ENCODE measurements at regions of chr20 and their contacts with region 1.

Region 1: GRCh38 chr20:41161886-41162285 is 24.5 kb downstream of the PLCG1 start:
- DNase-seq: peak in 3 of 35 experiments; percentile 16 to 39 (median 28)
- ATAC-seq: no peak
- H3K4me3 ChIP-seq: no peak overlapping the region
- H3K4me3 Mint-ChIP-seq: peak overlapping the region in 2 of 3 donors; percentile 58 to 61
- H3K27ac ChIP-seq: peak overlapping the region; percentile 90
- H3K27ac Mint-ChIP-seq: peak overlapping the region; percentile 92 to 97
- H3K4me1 ChIP-seq: peaks cover 39 to 86% of the 10 kb centered on the region in 2 experiments
- H3K4me1 Mint-ChIP-seq: peaks cover 76 to 82% (median 76%) of the 10 kb centered on the region in 3 donors
- H3K27me3 ChIP-seq: no peaks in the 10 kb centered on the region
- H3K27me3 Mint-ChIP-seq: peaks cover 0 to 2% of the 10 kb centered on the region in 2 donors

Region 2: GRCh38 chr20:41178904-41179432 is 17.1 kb after region 1 on chr20:
- CTCF ChIA-PET with region 1: no interaction called
- POLR2A ChIA-PET with region 1: no interaction called
- DNase-seq: peak in 1 of 35 experiments; percentile 0
- ATAC-seq: no peak
- H3K4me3 ChIP-seq: no peak overlapping the region
- H3K4me3 Mint-ChIP-seq: no peak overlapping the region
- H3K27ac ChIP-seq: no peak overlapping the region
- H3K27ac Mint-ChIP-seq: peak overlapping the region; percentile 23 to 66
- H3K4me1 ChIP-seq: peaks cover 0 to 10% of the 10 kb centered on the region in 2 experiments
- H3K4me1 Mint-ChIP-seq: peaks cover 12 to 17% (median 15%) of the 10 kb centered on the region in 3 donors
- H3K27me3 ChIP-seq: no peaks in the 10 kb centered on the region
- H3K27me3 Mint-ChIP-seq: no peaks in the 10 kb centered on the region

Region 3: GRCh38 chr20:41339507-41340326 is 177.8 kb after region 1 on chr20:
- CTCF ChIA-PET with region 1: no interaction called
- POLR2A ChIA-PET with region 1: interaction called in 1 of 2 experiments, 13 read pairs
- DNase-seq: peak; percentile 49 to 90 (median 78)
- ATAC-seq: peak; percentile 90 to 94 (median 94)
- H3K4me3 ChIP-seq: peak overlapping the region; percentile 22 to 57
- H3K4me3 Mint-ChIP-seq: peak overlapping the region; percentile 67 to 82 (median 73)
- H3K27ac ChIP-seq: no peak overlapping the region
- H3K27ac Mint-ChIP-seq: peak overlapping the region; percentile 24 to 46
- H3K4me1 ChIP-seq: peaks cover 4 to 14% of the 10 kb centered on the region in 2 experiments
- H3K4me1 Mint-ChIP-seq: peaks cover 8 to 11% (median 10%) of the 10 kb centered on the region in 3 donors
- H3K27me3 ChIP-seq: peaks cover 5 to 18% of the 10 kb centered on the region in 2 experiments
- H3K27me3 Mint-ChIP-seq: peaks cover 6 to 11% of the 10 kb centered on the region in 2 donors